Esophagus muscularis mucosa (tissue), 4 donors: ENCODE measurements at regions of chrX and their contacts with region 1.

Region 1: GRCh38 chrX:106894392-106894909 is 8.7 kb downstream of the RIPPLY1 start:
- DNase-seq: no peak
- H3K4me3 ChIP-seq: no peak overlapping the region
- H3K27ac ChIP-seq: peak overlapping the region in 1 of 4 donors; percentile 18
- H3K4me1 ChIP-seq: peaks cover 0 to 9% (median 9%) of the 10 kb centered on the region in 4 donors
- H3K27me3 ChIP-seq: no peaks in the 10 kb centered on the region
- CTCF ChIP-seq: peak; percentile 76 to 80 (median 77)
- EP300 ChIP-seq: no peak
- POLR2A ChIP-seq: no peak

Region 2: GRCh38 chrX:106317798-106318197 is 576.7 kb before region 1 on chrX:
- intact Hi-C with region 1: no loop called
- DNase-seq: no peak
- H3K4me3 ChIP-seq: no peak overlapping the region
- H3K27ac ChIP-seq: no peak overlapping the region
- H3K4me1 ChIP-seq: no peaks in the 10 kb centered on the region
- H3K27me3 ChIP-seq: peaks cover 0 to 4% (median 0%) of the 10 kb centered on the region in 4 donors
- CTCF ChIP-seq: no peak
- EP300 ChIP-seq: no peak
- POLR2A ChIP-seq: no peak

Region 3: DNA sequence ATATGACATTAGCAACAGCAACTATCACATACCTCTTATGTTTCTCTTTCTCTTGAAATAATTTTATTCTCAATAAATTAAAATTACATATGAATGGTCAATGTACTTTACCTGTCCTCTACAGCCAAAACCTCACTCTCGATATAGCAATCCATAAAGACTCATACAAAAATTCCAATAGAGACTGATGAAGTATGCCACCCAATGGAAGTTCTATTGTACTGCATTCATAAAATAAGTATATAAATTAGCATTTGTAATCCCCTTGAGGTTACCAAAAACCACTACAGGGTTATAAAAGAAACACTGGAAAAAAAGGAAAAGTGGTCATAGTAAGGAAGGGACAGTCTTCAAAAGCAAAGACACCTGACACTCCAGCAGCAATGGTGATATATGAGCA is 58.5 kb after region 1 on chrX:
- intact Hi-C with region 1: loop called (anchors 5 kb)
- DNase-seq: no peak
- H3K4me3 ChIP-seq: no peak overlapping the region
- H3K27ac ChIP-seq: no peak overlapping the region
- H3K4me1 ChIP-seq: no peaks in the 10 kb centered on the region
- H3K27me3 ChIP-seq: peaks cover 0 to 5% (median 0%) of the 10 kb centered on the region in 4 donors
- CTCF ChIP-seq: peak; percentile 28 to 40 (median 31)
- EP300 ChIP-seq: no peak
- POLR2A ChIP-seq: no peak